ENCODE measurements at regions of chr6 and their contacts with region 1.

Region 1: DNA sequence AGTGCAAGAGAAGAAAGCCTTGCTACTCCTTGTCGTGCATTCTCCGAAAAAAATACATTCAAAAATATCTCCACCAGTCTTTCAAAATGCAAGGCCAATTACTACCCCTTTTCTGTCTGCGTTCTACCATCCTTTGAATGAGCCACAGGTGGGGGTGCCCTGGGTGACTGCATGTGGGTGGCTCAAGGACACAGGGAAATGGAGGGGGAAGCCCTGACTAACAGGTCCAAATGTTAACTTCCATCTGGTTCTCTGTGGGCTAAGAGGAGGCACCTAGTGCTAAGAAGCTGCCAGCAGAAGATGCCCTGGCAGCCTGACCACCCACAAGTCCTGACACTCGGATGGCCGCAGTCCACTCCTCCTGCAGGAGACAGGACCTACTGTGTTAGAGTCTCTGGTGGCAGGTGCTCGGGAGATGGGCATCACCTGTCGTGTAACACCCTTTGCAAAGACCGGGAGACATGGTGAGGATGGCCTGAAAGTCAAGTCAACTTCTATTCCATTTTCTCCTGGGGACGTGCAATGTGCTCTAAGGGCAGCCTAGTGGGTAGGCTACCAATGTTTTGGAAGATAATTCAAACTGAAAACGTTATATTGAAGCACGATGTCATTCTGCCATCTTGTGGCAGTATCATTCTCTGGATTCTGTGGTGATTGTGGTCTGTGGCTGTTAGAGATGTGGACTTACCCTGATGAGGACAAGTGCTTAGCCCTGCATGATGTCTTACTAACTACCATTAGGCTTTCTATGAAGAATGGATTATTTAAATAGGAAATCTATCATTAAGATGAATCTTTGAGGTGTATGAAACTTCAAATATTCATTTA is 27.4 kb upstream of the IGF2R start:
- DNase-seq: no peak
- H3K4me3 ChIP-seq: no peak overlapping the region
- H3K27me3 ChIP-seq: no peaks in the 10 kb centered on the region
- CTCF ChIP-seq: peak; percentile 60

Region 2: DNA sequence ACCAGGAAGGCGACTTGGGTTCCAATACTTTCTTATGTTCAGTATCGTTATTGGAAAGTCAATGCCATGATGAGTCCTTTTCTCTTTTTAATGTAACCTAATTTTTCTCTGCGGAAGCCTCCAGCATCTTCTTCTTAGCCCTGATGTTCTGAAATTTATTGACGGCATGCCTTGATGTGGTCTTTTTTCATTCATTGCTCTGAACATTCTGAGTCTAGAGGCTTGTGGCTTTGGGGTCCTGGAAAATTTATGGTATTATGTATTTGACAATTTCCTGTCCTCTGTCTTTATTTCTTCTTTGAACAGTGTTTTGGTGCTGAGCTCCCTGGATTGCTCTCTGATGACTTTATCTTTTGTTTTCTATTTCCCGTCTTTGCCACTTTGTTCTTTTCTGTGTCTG is 79.4 kb before region 1 on chr6:
- CTCF ChIA-PET with region 1: interaction called, 95 read pairs
- POLR2A ChIA-PET with region 1: no interaction called
- DNase-seq: no peak
- H3K4me3 ChIP-seq: no peak overlapping the region
- H3K27me3 ChIP-seq: peaks cover 4% of the 10 kb centered on the region; the same call in 1 of the 2 replicates
- CTCF ChIP-seq: no peak

Region 3: DNA sequence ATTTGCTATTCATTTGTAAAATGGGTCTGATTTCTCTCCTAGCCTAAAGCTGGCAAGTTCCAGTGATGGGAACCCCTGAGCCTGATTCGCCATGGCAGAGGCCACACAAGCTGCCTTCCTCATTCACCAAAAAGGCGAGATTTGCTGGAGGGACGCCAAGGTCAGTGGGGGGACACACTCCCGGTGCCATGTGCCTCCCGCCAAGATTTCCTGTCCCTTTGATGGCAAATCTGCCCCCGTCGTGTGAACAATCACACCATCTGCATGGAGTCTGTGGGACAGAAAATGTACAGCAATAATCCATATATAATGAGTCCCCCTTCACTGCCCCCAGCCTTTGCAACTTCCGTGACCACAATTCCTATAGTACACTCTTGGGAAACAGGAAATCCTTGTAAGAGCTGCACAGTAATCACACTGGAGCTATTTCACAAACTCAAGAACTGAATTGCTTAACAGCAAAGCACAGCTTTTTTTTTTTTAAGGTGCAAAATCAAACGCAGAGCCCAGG is 11.6 kb after region 1 on chr6:
- CTCF ChIA-PET with region 1: interaction called, 12 read pairs
- POLR2A ChIA-PET with region 1: no interaction called
- DNase-seq: no peak
- H3K4me3 ChIP-seq: no peak overlapping the region
- H3K27me3 ChIP-seq: peaks cover 4% of the 10 kb centered on the region
- CTCF ChIP-seq: no peak

Measured in BJ (cell line).